H1 (cell line): ENCODE measurements at regions of chr3 and their contacts with region 1.

Region 1: GRCh38 chr3:56303487-56303886 is 164.8 kb downstream of the ERC2 start:
- DNase-seq: peak; percentile 61 to 79
- H3K4me3 ChIP-seq: no peak overlapping the region
- H3K27ac ChIP-seq: no peak overlapping the region
- H3K4me1 ChIP-seq: peaks cover 1 to 13% (median 8%) of the 10 kb centered on the region in 4 experiments; a peak in 4 of 7 replicates
- H3K27me3 ChIP-seq: no peaks in the 10 kb centered on the region
- CTCF ChIP-seq: peak; percentile 65 to 81 (median 78)
- EP300 ChIP-seq: no peak
- POLR2A ChIP-seq: no peak
- RAD21 ChIP-seq: peak; percentile 75 to 84

Region 2: GRCh38 chr3:56251343-56251945 is 52.0 kb before region 1 on chr3:
- CTCF ChIA-PET with region 1: interaction called, 44 read pairs
- POLR2A ChIA-PET with region 1: no interaction called
- DNase-seq: no peak
- H3K4me3 ChIP-seq: no peak overlapping the region
- H3K27ac ChIP-seq: no peak overlapping the region
- H3K4me1 ChIP-seq: peaks cover 0 to 12% (median 8%) of the 10 kb centered on the region in 4 experiments; a peak in 5 of 7 replicates
- H3K27me3 ChIP-seq: no peaks in the 10 kb centered on the region
- CTCF ChIP-seq: peak in 2 of 3 experiments; percentile 58 to 72; a peak in 3 of 4 replicates
- EP300 ChIP-seq: no peak
- POLR2A ChIP-seq: no peak
- RAD21 ChIP-seq: peak; percentile 83 to 84

Region 3: GRCh38 chr3:56275120-56275519 is 28.4 kb before region 1 on chr3:
- CTCF ChIA-PET with region 1: interaction called, 16 read pairs
- POLR2A ChIA-PET with region 1: no interaction called
- DNase-seq: no peak
- H3K4me3 ChIP-seq: no peak overlapping the region
- H3K27ac ChIP-seq: no peak overlapping the region
- H3K4me1 ChIP-seq: peaks cover 0 to 5% (median 1%) of the 10 kb centered on the region in 4 experiments; a peak in 2 of 7 replicates
- H3K27me3 ChIP-seq: no peaks in the 10 kb centered on the region
- CTCF ChIP-seq: no peak
- EP300 ChIP-seq: no peak
- POLR2A ChIP-seq: no peak
- RAD21 ChIP-seq: no peak

Region 4: DNA sequence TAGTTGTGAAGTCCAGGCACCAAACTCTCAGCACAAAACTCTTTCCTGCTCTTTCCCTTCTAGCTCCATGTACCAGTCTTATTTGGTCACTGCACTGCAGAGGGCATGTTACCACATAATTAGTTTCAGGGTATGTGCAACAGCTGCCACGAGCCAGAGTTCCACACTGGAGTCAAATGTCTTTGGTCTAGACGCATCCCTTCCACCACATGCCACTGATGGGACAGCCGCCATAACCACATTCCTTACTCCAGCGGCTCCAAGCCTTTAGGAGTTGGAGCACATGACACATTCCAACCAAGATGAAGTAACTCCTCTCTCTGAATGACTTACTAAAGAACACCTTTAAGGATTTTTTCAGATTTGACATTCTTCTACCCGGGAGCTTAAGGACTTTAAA is 11.4 kb after region 1 on chr3:
- CTCF ChIA-PET with region 1: interaction called, 17 read pairs
- POLR2A ChIA-PET with region 1: no interaction called
- DNase-seq: no peak
- H3K4me3 ChIP-seq: no peak overlapping the region
- H3K27ac ChIP-seq: no peak overlapping the region
- H3K4me1 ChIP-seq: no peaks in the 10 kb centered on the region; a peak in 1 of 7 replicates
- H3K27me3 ChIP-seq: no peaks in the 10 kb centered on the region
- CTCF ChIP-seq: no peak
- EP300 ChIP-seq: no peak
- POLR2A ChIP-seq: no peak
- RAD21 ChIP-seq: no peak

Region 5: DNA sequence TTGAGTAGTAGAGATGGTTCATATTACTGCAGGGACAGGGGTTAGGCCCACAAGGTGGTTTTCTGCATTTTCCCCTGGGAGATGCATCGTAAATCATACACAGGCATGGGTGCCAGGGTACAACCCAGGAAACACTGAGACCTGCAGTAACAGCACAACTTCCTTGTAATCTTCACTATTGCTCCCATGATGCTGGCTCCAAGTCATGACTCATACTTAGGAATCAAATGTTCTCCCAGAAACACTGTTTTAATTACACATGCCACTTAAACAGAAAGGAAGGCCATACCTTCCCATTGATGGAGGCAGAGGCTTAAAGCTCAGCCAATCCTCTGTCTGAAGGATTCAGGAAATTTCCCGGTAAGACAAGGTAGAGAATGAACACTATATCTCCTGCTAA is 58.2 kb after region 1 on chr3:
- CTCF ChIA-PET with region 1: no interaction called
- POLR2A ChIA-PET with region 1: no interaction called
- DNase-seq: no peak
- H3K4me3 ChIP-seq: no peak overlapping the region
- H3K27ac ChIP-seq: no peak overlapping the region
- H3K4me1 ChIP-seq: peaks cover 0 to 6% (median 3%) of the 10 kb centered on the region in 4 experiments; a peak in 3 of 7 replicates
- H3K27me3 ChIP-seq: no peaks in the 10 kb centered on the region
- CTCF ChIP-seq: no peak
- EP300 ChIP-seq: no peak
- POLR2A ChIP-seq: no peak
- RAD21 ChIP-seq: no peak